ENCODE measurements at regions of chr11 and their contacts with region 1.

Region 1: GRCh38 chr11:69642913-69643632 is 2.1 kb downstream of the CCND1 start:
- DNase-seq: peak; percentile 58 to 80
- H3K4me3 ChIP-seq: peak overlapping the region; percentile 49 to 70
- H3K27ac ChIP-seq: peak overlapping the region; percentile 56 to 62
- H3K4me1 ChIP-seq: peaks cover 0 to 38% of the 10 kb centered on the region in 2 donors
- H3K27me3 ChIP-seq: peaks cover 3 to 21% of the 10 kb centered on the region in 2 donors
- CTCF ChIP-seq: peak; percentile 87 to 98 (median 95)
- POLR2A ChIP-seq: peak in 1 of 2 donors; percentile 30

Region 2: DNA sequence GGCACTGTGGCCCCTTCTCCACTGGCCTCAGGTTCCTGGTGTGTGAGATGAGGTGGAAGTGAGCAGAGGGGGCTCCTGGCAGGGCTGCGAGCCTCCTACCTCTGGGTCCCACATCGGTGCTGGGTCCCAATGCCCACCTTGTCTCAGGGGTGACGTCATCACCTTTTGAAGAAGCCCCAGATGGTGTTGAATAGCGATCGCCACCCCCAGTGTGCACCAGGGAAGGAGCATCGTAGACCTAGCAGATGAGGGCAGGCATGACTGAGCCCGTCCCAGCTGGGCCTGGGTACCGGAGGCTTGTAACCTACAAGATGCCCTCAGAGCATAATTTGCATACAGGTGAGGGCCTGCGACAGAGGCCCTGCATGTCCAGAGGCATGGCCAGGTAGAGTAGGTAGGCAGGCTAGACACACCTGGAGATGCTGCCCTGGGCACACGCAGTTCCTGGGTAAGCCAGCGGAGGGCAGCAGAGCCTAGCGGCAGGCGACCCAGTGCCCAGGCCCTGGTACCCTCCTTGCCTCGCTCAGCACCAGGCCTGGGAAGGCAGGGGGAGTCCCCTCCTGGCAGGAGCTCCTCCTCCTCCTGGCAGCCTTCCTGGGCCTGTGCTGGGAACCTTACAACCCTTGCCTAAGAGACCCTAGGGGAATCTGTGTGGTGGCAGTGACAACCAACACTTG is 541.8 kb before region 1 on chr11:
- intact Hi-C with region 1: loop called (anchors 5 kb)
- DNase-seq: peak; percentile 58 to 69
- H3K4me3 ChIP-seq: no peak overlapping the region
- H3K27ac ChIP-seq: no peak overlapping the region
- H3K4me1 ChIP-seq: no peaks in the 10 kb centered on the region
- H3K27me3 ChIP-seq: no peaks in the 10 kb centered on the region
- CTCF ChIP-seq: peak; percentile 90 to 97 (median 92)
- POLR2A ChIP-seq: peak in 1 of 2 donors; percentile 15

Region 3: GRCh38 chr11:69280994-69281393 is 362.1 kb before region 1 on chr11:
- intact Hi-C with region 1: no loop called
- DNase-seq: no peak
- H3K4me3 ChIP-seq: no peak overlapping the region
- H3K27ac ChIP-seq: no peak overlapping the region
- H3K4me1 ChIP-seq: no peaks in the 10 kb centered on the region
- H3K27me3 ChIP-seq: no peaks in the 10 kb centered on the region
- CTCF ChIP-seq: no peak
- POLR2A ChIP-seq: no peak

Region 4: DNA sequence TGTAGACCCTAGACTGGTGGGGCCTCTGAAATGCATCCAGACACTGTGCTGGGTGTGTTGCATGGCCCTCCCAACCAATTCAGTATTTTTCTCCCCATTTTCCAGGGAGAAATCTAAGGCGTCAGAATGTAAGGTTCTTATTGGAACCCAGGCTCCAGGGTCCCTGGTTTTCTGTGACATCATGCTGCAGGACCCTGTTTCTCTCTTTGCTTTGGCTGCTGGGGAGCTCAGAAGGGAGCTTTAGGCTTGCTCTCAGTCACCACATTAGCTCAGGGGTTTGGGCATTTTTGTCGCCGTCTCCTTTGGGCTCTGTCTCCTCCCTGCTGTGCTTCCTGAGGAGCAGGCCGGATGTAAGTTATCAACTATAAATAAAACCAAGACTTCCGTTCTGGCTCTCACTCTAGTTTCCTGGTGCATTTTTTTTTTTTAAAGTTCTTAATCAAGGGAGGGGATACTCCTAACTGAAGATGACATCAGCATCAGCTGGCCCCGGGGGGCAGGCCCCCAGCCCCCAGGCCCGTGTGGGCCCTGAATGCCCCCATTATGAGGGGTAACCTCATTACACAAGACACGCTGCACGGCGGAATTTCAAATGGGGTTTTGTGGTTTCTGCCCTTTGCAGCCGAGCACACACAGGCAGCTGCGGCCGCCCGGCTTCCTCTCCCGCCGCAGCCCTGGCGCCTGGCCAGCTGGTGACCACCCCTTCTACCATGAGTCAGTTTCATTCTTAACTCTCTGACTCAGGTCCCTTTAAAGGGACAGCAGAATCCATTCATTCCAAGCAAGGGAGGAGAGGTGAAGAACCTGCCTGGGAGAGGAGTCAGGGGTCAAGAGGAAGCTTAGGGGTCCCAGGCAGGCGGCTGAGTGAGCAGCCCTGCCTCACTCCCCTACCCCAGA is 345.9 kb before region 1 on chr11:
- intact Hi-C with region 1: loop called (anchors 10 kb)
- DNase-seq: peak; percentile 74 to 79
- H3K4me3 ChIP-seq: no peak overlapping the region
- H3K27ac ChIP-seq: peak overlapping the region; percentile 28 to 52
- H3K4me1 ChIP-seq: peaks cover 0 to 14% of the 10 kb centered on the region in 2 donors
- H3K27me3 ChIP-seq: no peaks in the 10 kb centered on the region
- CTCF ChIP-seq: no peak
- POLR2A ChIP-seq: no peak